GM12878 (cell line): ENCODE measurements at regions of chr7 and their contacts with region 1.

Region 1: DNA sequence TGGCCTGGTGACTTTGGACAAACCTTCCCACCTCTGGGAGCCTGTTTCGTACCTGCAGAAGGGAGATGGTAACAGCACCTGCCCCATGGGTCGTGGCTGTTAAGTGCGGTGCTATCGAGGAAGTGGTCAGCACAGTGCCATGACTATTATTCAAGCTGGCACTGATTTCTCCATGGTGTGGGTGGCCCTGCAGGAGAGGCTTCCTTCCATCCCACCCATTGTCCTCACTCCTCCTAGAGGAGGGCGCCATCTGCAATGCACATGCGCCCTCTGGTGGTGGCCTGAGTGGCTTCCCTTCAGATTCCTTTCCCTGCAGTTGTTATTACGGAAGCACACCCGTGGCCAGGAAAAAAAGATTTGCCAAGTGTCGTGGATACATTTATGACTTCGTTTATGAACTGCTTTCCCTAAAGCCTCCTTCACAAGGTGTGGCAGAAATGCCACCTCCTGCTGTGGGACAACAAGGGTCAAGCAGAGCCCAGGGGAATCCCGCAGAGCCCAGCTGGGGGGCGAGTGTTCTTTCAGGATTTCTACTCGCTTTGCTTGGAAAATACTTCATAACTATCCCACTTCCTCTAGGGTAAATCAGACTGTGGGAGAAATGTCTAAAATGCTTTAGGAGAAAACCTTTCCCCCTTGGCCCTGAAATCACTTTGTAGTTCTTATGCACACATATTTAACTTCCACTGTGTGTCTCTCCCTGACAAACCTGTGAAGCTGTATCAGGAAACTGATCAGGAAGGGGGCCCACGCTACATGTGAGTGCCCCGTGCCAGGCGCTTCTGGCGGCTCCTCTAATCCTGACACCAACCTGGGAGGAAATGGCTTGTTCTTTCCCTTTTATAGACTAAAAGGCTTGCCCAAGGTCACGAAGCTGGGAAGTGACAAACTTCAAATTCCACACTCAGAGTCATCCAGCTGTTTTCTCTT is 98.0 kb upstream of the ANLN start:
- DNase-seq: no peak
- ATAC-seq: peak; percentile 83
- H3K4me3 ChIP-seq: peak overlapping the region; percentile 35; the same call in 1 of the 2 replicates
- H3K27ac ChIP-seq: no peak overlapping the region
- H3K4me1 ChIP-seq: peaks cover 12% of the 10 kb centered on the region
- H3K27me3 ChIP-seq: no peaks in the 10 kb centered on the region
- CTCF ChIP-seq: peak; percentile 93 to 98 (median 96); a peak in 5 of 6 replicates
- EP300 ChIP-seq: no peak
- POLR2A ChIP-seq: no peak
- RAD21 ChIP-seq: peak; percentile 99

Region 2: GRCh38 chr7:35985126-35985754 is 306.4 kb before region 1 on chr7:
- CTCF ChIA-PET with region 1: interaction called, 86 read pairs
- POLR2A ChIA-PET with region 1: no interaction called
- RAD21 ChIA-PET with region 1: interaction called, 34 read pairs
- SMC1A ChIA-PET with region 1: interaction called, 51 read pairs
- in situ Hi-C with region 1: loop called (anchors 5 kb)
- intact Hi-C with region 1: loop called (anchors 1 kb)
- DNase-seq: no peak
- ATAC-seq: peak; percentile 99
- H3K4me3 ChIP-seq: no peak overlapping the region
- H3K27ac ChIP-seq: no peak overlapping the region
- H3K4me1 ChIP-seq: no peaks in the 10 kb centered on the region
- H3K27me3 ChIP-seq: peaks cover 0 to 3% of the 10 kb centered on the region in 2 experiments; a peak in 1 of 4 replicates
- CTCF ChIP-seq: peak; percentile 91 to 96 (median 92)
- EP300 ChIP-seq: no peak
- POLR2A ChIP-seq: no peak
- RAD21 ChIP-seq: peak; percentile 99

Region 3: GRCh38 chr7:36075561-36075960 is 216.1 kb before region 1 on chr7:
- CTCF ChIA-PET with region 1: no interaction called
- POLR2A ChIA-PET with region 1: no interaction called
- RAD21 ChIA-PET with region 1: no interaction called
- SMC1A ChIA-PET with region 1: no interaction called
- in situ Hi-C with region 1: no loop called
- intact Hi-C with region 1: no loop called
- DNase-seq: no peak
- ATAC-seq: no peak
- H3K4me3 ChIP-seq: no peak overlapping the region
- H3K27ac ChIP-seq: no peak overlapping the region
- H3K4me1 ChIP-seq: no peaks in the 10 kb centered on the region
- H3K27me3 ChIP-seq: no peaks in the 10 kb centered on the region; a peak in 3 of 4 replicates
- CTCF ChIP-seq: no peak
- EP300 ChIP-seq: no peak
- POLR2A ChIP-seq: no peak
- RAD21 ChIP-seq: no peak

Region 4: DNA sequence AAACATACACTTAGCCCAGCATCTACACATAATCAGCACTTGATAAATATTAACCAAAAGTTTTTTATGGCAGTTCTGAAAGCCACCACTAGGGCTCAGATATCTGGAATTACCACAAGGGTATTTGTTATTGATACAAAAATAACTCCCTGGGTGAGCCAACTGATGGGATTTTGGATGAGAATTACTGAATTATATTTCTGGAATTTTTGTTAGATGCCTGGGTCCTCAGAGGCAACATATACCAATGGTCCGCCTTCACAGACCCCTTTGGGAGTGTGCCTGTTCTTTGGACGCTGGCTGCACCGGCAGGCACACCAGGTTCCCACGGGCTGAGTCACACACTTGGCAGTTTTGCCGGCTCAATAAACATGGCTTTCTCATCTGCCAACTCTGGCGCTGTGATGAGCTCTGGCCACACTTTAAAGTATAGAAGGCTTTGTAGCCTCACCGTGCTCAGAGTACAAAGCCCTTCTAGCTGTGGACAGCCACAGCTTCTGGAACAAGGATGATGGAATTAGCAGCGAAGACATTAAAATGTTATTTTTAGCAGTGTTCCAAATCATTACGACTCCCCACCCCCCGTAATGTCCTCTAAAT is 163.1 kb before region 1 on chr7:
- CTCF ChIA-PET with region 1: interaction called, 27 read pairs
- POLR2A ChIA-PET with region 1: no interaction called
- RAD21 ChIA-PET with region 1: interaction called, 14 read pairs
- SMC1A ChIA-PET with region 1: interaction called, 11 read pairs
- in situ Hi-C with region 1: no loop called
- intact Hi-C with region 1: loop called (anchors 2 kb)
- DNase-seq: no peak
- ATAC-seq: peak; percentile 55; the same call in 2 of the 3 replicates
- H3K4me3 ChIP-seq: no peak overlapping the region
- H3K27ac ChIP-seq: no peak overlapping the region
- H3K4me1 ChIP-seq: no peaks in the 10 kb centered on the region
- H3K27me3 ChIP-seq: no peaks in the 10 kb centered on the region
- CTCF ChIP-seq: peak in 2 of 3 experiments; percentile 29 to 35; a peak in 4 of 6 replicates
- EP300 ChIP-seq: no peak
- POLR2A ChIP-seq: no peak
- RAD21 ChIP-seq: no peak

Region 5: GRCh38 chr7:36165059-36165458 is 126.6 kb before region 1 on chr7:
- CTCF ChIA-PET with region 1: interaction called, 6 read pairs
- POLR2A ChIA-PET with region 1: no interaction called
- RAD21 ChIA-PET with region 1: interaction called, 4 read pairs
- SMC1A ChIA-PET with region 1: interaction called, 15 read pairs
- in situ Hi-C with region 1: no loop called
- intact Hi-C with region 1: no loop called
- DNase-seq: no peak
- ATAC-seq: peak; percentile 6; the same call in 2 of the 3 replicates
- H3K4me3 ChIP-seq: no peak overlapping the region
- H3K27ac ChIP-seq: no peak overlapping the region
- H3K4me1 ChIP-seq: no peaks in the 10 kb centered on the region
- H3K27me3 ChIP-seq: no peaks in the 10 kb centered on the region
- CTCF ChIP-seq: no peak
- EP300 ChIP-seq: no peak
- POLR2A ChIP-seq: no peak
- RAD21 ChIP-seq: no peak

Region 6: GRCh38 chr7:36192053-36192824 is 99.4 kb before region 1 on chr7:
- CTCF ChIA-PET with region 1: interaction called, 6 read pairs
- POLR2A ChIA-PET with region 1: no interaction called
- RAD21 ChIA-PET with region 1: interaction called, 10 read pairs
- SMC1A ChIA-PET with region 1: interaction called, 5 read pairs
- in situ Hi-C with region 1: no loop called
- intact Hi-C with region 1: no loop called
- DNase-seq: peak; percentile 11
- ATAC-seq: peak; percentile 71
- H3K4me3 ChIP-seq: peak overlapping the region; percentile 36; the same call in 1 of the 2 replicates
- H3K27ac ChIP-seq: no peak overlapping the region
- H3K4me1 ChIP-seq: no peaks in the 10 kb centered on the region
- H3K27me3 ChIP-seq: no peaks in the 10 kb centered on the region
- CTCF ChIP-seq: no peak
- EP300 ChIP-seq: peak; percentile 73 to 89
- POLR2A ChIP-seq: no peak
- RAD21 ChIP-seq: no peak

Region 7: GRCh38 chr7:36272567-36273269 is 18.9 kb before region 1 on chr7:
- CTCF ChIA-PET with region 1: interaction called, 3 read pairs
- POLR2A ChIA-PET with region 1: no interaction called
- RAD21 ChIA-PET with region 1: interaction called, 11 read pairs
- SMC1A ChIA-PET with region 1: interaction called, 68 read pairs
- in situ Hi-C with region 1: no loop called
- intact Hi-C with region 1: no loop called
- DNase-seq: no peak
- ATAC-seq: peak; percentile 18
- H3K4me3 ChIP-seq: no peak overlapping the region
- H3K27ac ChIP-seq: no peak overlapping the region
- H3K4me1 ChIP-seq: no peaks in the 10 kb centered on the region
- H3K27me3 ChIP-seq: no peaks in the 10 kb centered on the region
- CTCF ChIP-seq: no peak
- EP300 ChIP-seq: no peak
- POLR2A ChIP-seq: no peak
- RAD21 ChIP-seq: no peak

Region 8: DNA sequence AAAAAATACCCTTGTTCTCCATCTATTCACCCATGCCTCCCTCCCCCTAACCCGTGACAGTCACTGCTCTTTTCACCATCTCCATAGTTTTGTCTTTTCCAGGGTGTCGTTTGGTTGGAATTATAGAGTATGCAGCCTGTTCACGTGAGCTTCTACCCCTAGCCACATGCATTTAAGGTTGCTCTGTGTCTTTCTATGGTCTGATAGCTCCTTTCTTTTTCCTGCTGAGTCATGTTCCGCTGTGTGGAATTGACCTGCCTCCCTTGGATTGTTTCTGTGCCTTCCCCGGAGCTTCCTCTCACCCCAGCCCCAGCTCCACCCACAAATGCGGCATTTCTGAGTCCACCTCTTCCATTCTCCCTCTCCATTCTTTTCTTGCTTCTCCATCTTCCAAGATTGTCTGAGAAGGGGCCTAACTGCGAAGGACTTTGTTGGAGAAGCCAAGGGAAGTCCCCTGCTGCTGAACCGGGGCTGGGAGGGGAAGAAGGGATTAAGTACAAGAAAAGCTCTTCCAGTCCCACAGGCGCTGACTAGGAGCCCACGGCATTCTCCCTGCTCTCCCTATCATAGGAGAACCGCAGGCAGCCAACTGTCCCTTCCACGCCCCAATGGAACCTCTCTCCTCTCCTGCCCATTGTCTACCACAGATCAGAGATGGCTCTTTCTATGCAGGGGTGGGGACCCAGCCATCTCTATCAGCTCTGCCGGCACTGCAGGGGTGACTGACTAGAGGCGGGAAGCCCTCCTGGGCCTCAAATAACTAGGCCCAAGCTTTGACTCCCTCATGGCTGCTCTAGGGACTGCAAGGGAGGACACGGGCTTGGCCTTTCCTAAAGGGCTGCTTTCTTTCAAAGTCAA is 10.5 kb after region 1 on chr7:
- CTCF ChIA-PET with region 1: interaction called, 11 read pairs
- POLR2A ChIA-PET with region 1: no interaction called
- RAD21 ChIA-PET with region 1: interaction called, 5 read pairs
- SMC1A ChIA-PET with region 1: interaction called, 11 read pairs
- in situ Hi-C with region 1: no loop called
- intact Hi-C with region 1: no loop called
- DNase-seq: no peak
- ATAC-seq: no peak
- H3K4me3 ChIP-seq: no peak overlapping the region
- H3K27ac ChIP-seq: no peak overlapping the region
- H3K4me1 ChIP-seq: no peaks in the 10 kb centered on the region
- H3K27me3 ChIP-seq: no peaks in the 10 kb centered on the region; a peak in 1 of 4 replicates
- CTCF ChIP-seq: no peak
- EP300 ChIP-seq: no peak
- POLR2A ChIP-seq: no peak
- RAD21 ChIP-seq: no peak